AG04450 (cell line): ENCODE measurements at regions of chr10 and their contacts with region 1.

Region 1: GRCh38 chr10:70221030-70221429 is 12.2 kb downstream of the PPA1 start:
- DNase-seq: no peak
- H3K4me3 ChIP-seq: no peak overlapping the region
- H3K27ac ChIP-seq: no peak overlapping the region
- H3K27me3 ChIP-seq: no peaks in the 10 kb centered on the region
- CTCF ChIP-seq: no peak

Region 2: DNA sequence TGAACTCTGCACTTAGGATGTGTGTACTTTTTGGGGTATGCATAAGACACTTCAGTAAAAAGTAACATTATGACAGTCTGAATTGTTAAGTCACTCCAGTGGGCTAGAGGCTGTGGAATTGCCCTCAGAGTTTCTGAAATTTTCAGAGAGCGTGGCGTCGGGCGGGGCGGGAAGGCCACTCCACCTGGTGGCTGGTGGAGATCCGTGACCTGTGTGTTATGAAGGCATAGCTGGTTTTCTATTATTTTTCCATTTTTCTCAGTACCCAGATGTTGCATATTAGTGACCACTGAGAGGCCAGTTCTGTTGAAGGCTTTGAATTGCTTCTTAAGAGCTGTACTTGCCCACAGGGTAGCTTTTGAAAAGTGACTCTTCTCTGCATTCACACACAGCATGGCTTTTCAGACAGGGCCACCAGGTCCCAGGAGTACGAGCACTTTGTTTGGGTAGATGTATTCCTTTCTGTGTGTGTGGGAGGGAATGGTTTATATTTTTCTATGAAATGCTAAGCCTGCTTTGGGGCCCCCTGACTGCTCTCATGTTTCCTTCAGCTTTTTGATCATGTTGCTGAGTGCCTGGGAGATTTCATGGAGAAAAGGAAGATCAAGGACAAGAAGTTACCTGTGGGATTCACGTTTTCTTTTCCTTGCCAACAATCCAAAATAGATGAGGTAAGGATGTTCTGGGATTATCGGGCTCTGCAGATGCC is 856.6 kb before region 1 on chr10:
- CTCF ChIA-PET with region 1: no interaction called
- POLR2A ChIA-PET with region 1: no interaction called
- DNase-seq: no peak
- H3K4me3 ChIP-seq: no peak overlapping the region
- H3K27ac ChIP-seq: peak overlapping the region; percentile 40
- H3K27me3 ChIP-seq: no peaks in the 10 kb centered on the region
- CTCF ChIP-seq: no peak

Region 3: GRCh38 chr10:69786791-69787190 is 434.2 kb before region 1 on chr10:
- CTCF ChIA-PET with region 1: no interaction called
- POLR2A ChIA-PET with region 1: no interaction called
- DNase-seq: no peak
- H3K4me3 ChIP-seq: no peak overlapping the region
- H3K27ac ChIP-seq: no peak overlapping the region
- H3K27me3 ChIP-seq: peaks cover 32% of the 10 kb centered on the region
- CTCF ChIP-seq: peak; percentile 54

Region 4: GRCh38 chr10:70084189-70084588 is 136.8 kb before region 1 on chr10:
- CTCF ChIA-PET with region 1: no interaction called
- POLR2A ChIA-PET with region 1: no interaction called
- DNase-seq: no peak
- H3K4me3 ChIP-seq: no peak overlapping the region
- H3K27ac ChIP-seq: no peak overlapping the region
- H3K27me3 ChIP-seq: no peaks in the 10 kb centered on the region
- CTCF ChIP-seq: no peak

Region 5: DNA sequence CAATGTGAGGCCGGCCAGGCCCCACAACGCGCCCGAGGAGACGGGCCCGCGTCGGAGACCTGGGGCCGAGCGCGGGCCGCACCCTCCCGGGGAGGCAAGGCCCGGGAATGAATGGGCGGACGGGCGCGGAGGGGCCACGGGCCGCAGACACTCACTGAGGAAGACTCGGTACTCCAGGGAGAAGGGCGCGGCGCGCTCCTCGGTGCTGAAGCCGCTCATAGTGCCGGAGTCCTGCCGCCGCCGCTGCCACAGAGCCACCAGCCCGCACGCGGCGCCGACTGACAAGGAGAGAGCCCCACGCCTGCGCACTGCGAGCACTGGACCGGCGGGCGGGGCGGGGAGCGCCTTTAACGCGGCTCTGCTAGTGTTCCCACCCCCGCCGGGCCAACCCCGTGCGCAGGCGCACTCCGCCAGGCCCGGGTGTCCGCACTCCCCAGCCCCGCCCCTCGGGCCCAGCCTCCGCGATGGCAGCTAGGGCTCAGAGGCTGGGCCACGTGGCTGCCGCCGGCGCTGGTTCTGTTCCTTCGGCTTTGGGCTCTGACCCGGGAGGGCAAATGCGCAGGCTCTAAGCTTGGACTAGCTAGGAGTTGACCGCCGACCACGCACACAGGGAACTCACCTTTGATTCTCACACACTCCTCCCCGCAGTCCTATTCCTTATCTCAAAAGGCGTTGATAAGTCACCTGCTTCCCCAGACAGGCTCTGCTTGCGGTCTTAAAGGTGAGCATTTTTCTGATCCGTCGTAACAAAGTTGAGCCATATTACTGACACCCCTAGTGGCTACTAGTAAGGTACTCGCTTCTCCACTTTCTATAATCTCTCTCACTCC is 12.3 kb after region 1 on chr10 and contains the start of gene PPA1:
- CTCF ChIA-PET with region 1: interaction called, 18 read pairs
- POLR2A ChIA-PET with region 1: no interaction called
- DNase-seq: peak; percentile 78
- H3K4me3 ChIP-seq: peak within 1 kb of the TSS; percentile 81
- H3K27ac ChIP-seq: peak within 1 kb of the TSS; percentile 47
- H3K27me3 ChIP-seq: no peaks in the 10 kb centered on the region
- CTCF ChIP-seq: peak; percentile 20; the same call in 1 of the 2 replicates
- polyA plus RNA-seq, gene PPA1: 148 and 227 TPM in 2 replicates

Region 6: DNA sequence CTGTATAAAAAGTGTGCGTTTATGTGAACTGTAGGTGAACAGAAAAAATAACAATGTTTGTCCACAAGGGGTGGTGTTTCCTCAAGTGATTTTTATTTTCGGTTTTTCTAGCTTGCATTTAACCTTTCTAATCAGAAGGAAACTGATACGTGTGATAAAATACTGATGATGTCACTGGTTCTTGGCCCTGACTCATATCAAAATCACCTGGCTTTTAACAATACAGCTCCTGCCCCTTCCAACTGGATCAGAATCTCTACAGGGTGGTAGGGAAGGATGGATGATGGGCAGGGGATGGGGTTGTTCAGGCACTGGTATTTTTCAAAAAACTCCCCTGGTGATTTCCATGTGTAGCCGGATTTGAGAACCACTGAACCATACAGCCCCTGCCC is 51.9 kb after region 1 on chr10:
- CTCF ChIA-PET with region 1: interaction called, 12 read pairs
- POLR2A ChIA-PET with region 1: no interaction called
- DNase-seq: no peak
- H3K4me3 ChIP-seq: no peak overlapping the region
- H3K27ac ChIP-seq: no peak overlapping the region
- H3K27me3 ChIP-seq: no peaks in the 10 kb centered on the region
- CTCF ChIP-seq: peak; percentile 53

Region 7: GRCh38 chr10:70355051-70356021 is 134.3 kb after region 1 on chr10:
- CTCF ChIA-PET with region 1: interaction called, 10 read pairs
- POLR2A ChIA-PET with region 1: no interaction called
- DNase-seq: no peak
- H3K4me3 ChIP-seq: no peak overlapping the region
- H3K27ac ChIP-seq: no peak overlapping the region
- H3K27me3 ChIP-seq: peaks cover 2% of the 10 kb centered on the region
- CTCF ChIP-seq: no peak

Region 8: DNA sequence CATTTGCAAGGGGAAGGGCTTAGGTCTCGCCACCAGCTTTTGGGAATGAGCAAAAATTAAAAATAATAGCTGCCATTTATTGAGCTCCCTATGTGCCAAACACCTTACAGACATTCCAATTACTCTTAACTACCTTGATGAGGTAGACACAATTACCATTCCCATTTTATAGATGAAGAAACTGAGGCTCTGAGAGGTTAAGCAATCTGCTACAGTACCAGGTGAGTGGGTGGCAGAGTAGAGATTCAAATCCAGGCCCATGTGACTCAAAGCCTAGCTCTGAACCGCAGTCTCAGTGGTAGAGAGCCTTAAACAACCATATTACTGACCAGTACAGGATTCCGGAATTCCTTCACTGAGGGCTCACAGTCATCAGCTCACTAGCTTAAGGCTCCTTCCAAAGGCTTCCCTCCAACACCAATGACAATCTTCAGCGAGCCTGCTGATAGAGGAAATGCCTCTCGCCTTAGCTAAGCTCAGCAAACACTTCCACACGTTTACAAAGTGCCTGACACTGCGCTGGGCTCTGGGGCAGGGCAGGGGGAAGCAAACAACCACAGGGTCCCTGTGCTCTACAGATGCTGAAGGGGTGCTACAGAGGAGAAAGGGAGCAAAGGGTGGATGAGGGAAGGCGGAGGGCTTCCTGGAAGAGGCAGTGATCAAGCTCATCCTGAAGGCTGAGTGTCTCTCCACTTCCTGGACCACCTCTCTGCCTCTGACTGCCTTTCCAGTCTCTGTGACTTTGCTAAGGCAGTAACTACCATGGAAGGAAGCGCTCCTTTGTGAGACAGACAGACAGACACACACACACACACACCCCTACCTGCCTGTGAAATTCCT is 154.0 kb after region 1 on chr10:
- CTCF ChIA-PET with region 1: interaction called, 10 read pairs
- POLR2A ChIA-PET with region 1: no interaction called
- DNase-seq: no peak
- H3K4me3 ChIP-seq: no peak overlapping the region
- H3K27ac ChIP-seq: no peak overlapping the region
- H3K27me3 ChIP-seq: peaks cover 3% of the 10 kb centered on the region
- CTCF ChIP-seq: no peak

Region 9: GRCh38 chr10:70381471-70382421 is 160.7 kb after region 1 on chr10:
- CTCF ChIA-PET with region 1: interaction called, 10 read pairs
- POLR2A ChIA-PET with region 1: no interaction called
- DNase-seq: no peak
- H3K4me3 ChIP-seq: peak overlapping the region; percentile 91
- H3K27ac ChIP-seq: peak overlapping the region; percentile 31
- H3K27me3 ChIP-seq: peaks cover 7% of the 10 kb centered on the region
- CTCF ChIP-seq: 0 out of 2 replicates have a peak, but pooled peaks have one; percentile 8

Region 10: DNA sequence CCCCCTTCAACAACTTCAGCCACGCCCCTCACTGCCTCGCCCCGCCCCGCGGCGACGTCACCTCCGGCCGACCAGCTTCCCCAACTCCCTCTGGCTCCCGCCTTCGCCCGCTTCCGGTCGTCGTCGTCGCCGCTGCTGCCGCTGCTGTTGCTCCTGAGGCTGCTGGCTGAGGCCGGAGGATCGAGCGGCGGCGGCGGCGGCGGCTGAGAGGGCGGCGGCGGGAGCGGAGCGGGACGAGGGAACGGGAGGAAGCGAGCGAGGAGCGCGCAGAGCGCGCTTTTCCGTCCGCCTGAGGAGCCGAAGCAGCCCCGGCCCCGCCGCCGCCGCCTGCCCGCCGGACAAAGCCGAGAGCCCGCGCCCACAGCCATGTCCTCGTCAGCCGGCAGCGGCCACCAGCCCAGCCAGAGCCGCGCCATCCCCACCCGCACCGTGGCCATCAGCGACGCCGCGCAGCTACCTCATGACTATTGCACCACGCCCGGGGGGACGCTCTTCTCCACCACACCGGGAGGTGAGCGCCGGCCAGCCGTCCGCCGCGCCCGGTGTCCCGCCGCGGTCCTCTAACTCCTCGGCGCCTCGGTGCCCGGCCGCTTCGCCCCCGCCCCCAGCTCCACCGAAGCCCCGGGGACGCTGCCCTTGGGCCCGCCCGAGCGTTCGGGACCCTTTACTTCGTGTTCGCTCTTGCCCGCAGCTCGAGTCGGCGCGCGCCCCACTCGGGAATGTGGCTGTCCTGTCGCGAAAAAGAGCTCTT is 183.2 kb after region 1 on chr10 and contains the start of gene EIF4EBP2:
- CTCF ChIA-PET with region 1: interaction called, 19 read pairs
- POLR2A ChIA-PET with region 1: no interaction called
- DNase-seq: peak; percentile 84
- H3K4me3 ChIP-seq: peak within 1 kb of the TSS; percentile 91
- H3K27ac ChIP-seq: peak within 1 kb of the TSS; percentile 82
- H3K27me3 ChIP-seq: no peaks in the 10 kb centered on the region
- CTCF ChIP-seq: no peak
- polyA plus RNA-seq, gene EIF4EBP2: 27.3 and 31.2 TPM in 2 replicates

Region 11: DNA sequence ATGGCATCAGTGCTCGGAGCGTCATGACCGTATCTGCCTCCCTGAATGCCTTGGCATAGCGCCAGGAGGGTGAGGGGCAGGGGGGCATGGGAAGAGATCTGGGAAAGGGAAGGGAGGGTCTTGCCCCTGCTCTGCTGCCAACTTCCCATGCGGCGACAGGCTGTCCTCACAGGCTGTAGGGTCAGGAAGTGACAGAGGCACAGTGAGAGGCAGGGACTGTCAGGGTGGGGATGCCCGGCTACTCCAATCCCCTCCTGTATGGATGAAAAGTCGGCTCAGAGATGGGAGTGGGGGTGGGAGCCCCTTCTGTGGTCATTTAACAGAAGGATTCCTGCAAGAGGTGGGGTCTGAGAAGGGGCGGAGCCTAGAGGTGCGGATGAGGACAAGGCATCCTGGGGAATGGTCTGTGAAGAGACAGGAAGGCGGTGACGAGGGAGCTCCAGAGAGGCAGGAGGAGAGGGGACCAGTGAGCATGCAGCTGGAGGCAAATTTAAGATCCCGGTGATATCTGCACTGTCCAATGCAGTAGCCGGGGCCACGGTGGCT is 970.6 kb after region 1 on chr10:
- CTCF ChIA-PET with region 1: no interaction called
- POLR2A ChIA-PET with region 1: no interaction called
- DNase-seq: no peak
- H3K4me3 ChIP-seq: no peak overlapping the region
- H3K27ac ChIP-seq: no peak overlapping the region
- H3K27me3 ChIP-seq: peaks cover 44% of the 10 kb centered on the region
- CTCF ChIP-seq: no peak